CD8-positive, alpha-beta memory T cell (primary cell): ENCODE measurements at regions of chr1 and their contacts with region 1.

Region 1: GRCh38 chr1:154878371-154879022 is 8.4 kb upstream of the KCNN3 start:
- DNase-seq: peak; percentile 50 to 78 (median 58)
- H3K4me3 ChIP-seq: no peak overlapping the region
- H3K4me3 Mint-ChIP-seq: no peak overlapping the region
- H3K27ac ChIP-seq: no peak overlapping the region
- H3K27ac Mint-ChIP-seq: no peak overlapping the region
- H3K4me1 ChIP-seq: no peaks in the 10 kb centered on the region
- H3K4me1 Mint-ChIP-seq: no peaks in the 10 kb centered on the region
- H3K27me3 ChIP-seq: no peaks in the 10 kb centered on the region
- H3K27me3 Mint-ChIP-seq: peaks cover 6 to 9% of the 10 kb centered on the region in 2 donors

Region 2: GRCh38 chr1:154558575-154559465 is 319.7 kb before region 1 on chr1 and contains the start of gene UBE2Q1:
- CTCF ChIA-PET with region 1: interaction called, 28 read pairs
- POLR2A ChIA-PET with region 1: interaction called, 4 read pairs
- DNase-seq: peak; percentile 99 to 100 (median 100)
- H3K4me3 ChIP-seq: peak within 1 kb of the TSS; percentile 87
- H3K4me3 Mint-ChIP-seq: peak within 1 kb of the TSS; percentile 90 to 96 (median 92)
- H3K27ac ChIP-seq: peak within 1 kb of the TSS; percentile 65
- H3K27ac Mint-ChIP-seq: peak within 1 kb of the TSS; percentile 86 to 96 (median 94)
- H3K4me1 ChIP-seq: peaks cover 24% of the 10 kb centered on the region
- H3K4me1 Mint-ChIP-seq: peaks cover 36 to 49% (median 46%) of the 10 kb centered on the region in 3 donors
- H3K27me3 ChIP-seq: no peaks in the 10 kb centered on the region
- H3K27me3 Mint-ChIP-seq: peaks cover 0 to 2% of the 10 kb centered on the region in 2 donors
- total RNA-seq, gene UBE2Q1: 83.8 to 97.8 TPM

Region 3: GRCh38 chr1:154669464-154670282 is 208.8 kb before region 1 on chr1:
- CTCF ChIA-PET with region 1: interaction called, 30 read pairs
- POLR2A ChIA-PET with region 1: no interaction called
- DNase-seq: peak; percentile 37 to 82 (median 55)
- H3K4me3 ChIP-seq: no peak overlapping the region
- H3K4me3 Mint-ChIP-seq: no peak overlapping the region
- H3K27ac ChIP-seq: no peak overlapping the region
- H3K27ac Mint-ChIP-seq: no peak overlapping the region
- H3K4me1 ChIP-seq: no peaks in the 10 kb centered on the region
- H3K4me1 Mint-ChIP-seq: no peaks in the 10 kb centered on the region
- H3K27me3 ChIP-seq: no peaks in the 10 kb centered on the region
- H3K27me3 Mint-ChIP-seq: peaks cover 3 to 11% of the 10 kb centered on the region in 2 donors

Region 4: DNA sequence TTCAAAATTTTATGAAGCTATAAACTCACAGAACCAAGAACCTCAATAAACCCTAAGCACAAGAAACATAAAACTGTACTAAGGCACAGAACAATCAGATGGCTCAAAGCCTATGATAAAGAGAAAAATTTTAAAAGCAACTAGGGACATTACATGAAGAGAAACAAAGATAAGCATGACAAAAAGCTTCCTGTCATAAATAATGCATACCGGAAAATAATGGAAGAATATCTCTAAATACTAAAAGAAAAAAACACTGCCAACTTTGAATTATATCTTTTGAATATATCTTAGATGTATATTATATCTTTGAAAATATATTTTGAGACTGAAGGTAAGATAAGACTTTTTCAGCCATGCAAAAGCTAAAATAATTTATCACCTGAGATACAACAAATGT is 13.0 kb after region 1 on chr1:
- CTCF ChIA-PET with region 1: interaction called, 13 read pairs
- POLR2A ChIA-PET with region 1: no interaction called
- DNase-seq: no peak
- H3K4me3 ChIP-seq: no peak overlapping the region
- H3K4me3 Mint-ChIP-seq: no peak overlapping the region
- H3K27ac ChIP-seq: no peak overlapping the region
- H3K27ac Mint-ChIP-seq: no peak overlapping the region
- H3K4me1 ChIP-seq: no peaks in the 10 kb centered on the region
- H3K4me1 Mint-ChIP-seq: no peaks in the 10 kb centered on the region
- H3K27me3 ChIP-seq: no peaks in the 10 kb centered on the region
- H3K27me3 Mint-ChIP-seq: peaks cover 0 to 2% of the 10 kb centered on the region in 2 donors

Region 5: DNA sequence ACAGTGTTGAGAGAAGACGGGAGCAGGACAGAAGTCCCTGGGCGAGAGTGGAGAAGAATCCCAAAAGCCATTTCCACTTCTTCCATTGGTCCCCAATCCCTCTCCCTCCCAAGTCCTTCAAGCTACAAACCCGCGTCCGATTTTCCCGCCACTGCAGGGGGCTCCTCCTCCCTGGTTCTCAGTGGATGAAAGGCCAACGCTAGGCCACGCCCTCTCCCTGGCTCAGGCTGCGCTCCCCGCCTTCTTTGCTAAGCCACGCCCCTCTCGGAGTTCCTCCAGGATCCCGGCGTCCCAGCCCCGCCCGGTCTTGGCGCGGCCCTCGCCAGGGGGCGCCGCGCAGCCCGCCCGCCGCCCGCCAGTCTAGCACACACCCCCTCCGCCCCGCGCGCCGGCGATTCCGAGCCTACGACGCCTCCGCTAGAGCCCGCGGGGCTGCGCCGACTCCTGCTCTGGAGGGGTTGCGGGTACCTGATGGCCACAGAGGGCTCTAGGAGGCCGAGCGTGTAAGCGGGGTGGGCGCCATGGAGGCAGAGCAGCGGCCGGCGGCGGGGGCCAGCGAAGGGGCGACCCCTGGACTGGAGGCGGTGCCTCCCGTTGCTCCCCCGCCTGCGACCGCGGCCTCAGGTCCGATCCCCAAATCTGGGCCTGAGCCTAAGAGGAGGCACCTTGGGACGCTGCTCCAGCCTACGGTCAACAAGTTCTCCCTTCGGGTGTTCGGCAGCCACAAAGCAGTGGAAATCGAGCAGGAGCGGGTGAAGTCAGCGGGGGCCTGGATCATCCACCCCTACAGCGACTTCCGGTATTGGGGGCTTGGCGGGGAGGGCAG is 398.8 kb after region 1 on chr1 and contains the start of gene HCN3:
- CTCF ChIA-PET with region 1: no interaction called
- POLR2A ChIA-PET with region 1: no interaction called
- DNase-seq: peak; percentile 82 to 94 (median 91)
- H3K4me3 ChIP-seq: peak within 1 kb of the TSS; percentile 59
- H3K4me3 Mint-ChIP-seq: peak within 1 kb of the TSS; percentile 68 to 89 (median 80)
- H3K27ac ChIP-seq: peak within 1 kb of the TSS; percentile 7
- H3K27ac Mint-ChIP-seq: peak within 1 kb of the TSS; percentile 56 to 87 (median 64)
- H3K4me1 ChIP-seq: peaks cover 33% of the 10 kb centered on the region
- H3K4me1 Mint-ChIP-seq: peaks cover 33 to 42% (median 37%) of the 10 kb centered on the region in 3 donors
- H3K27me3 ChIP-seq: no peaks in the 10 kb centered on the region
- H3K27me3 Mint-ChIP-seq: no peaks in the 10 kb centered on the region
- total RNA-seq, gene HCN3: 3.2 to 3.7 TPM